PC-9 (cell line): ENCODE measurements at regions of chr9 and their contacts with region 1.

Region 1: GRCh38 chr9:125255781-125256391 is 5.7 kb upstream of the GAPVD1 start:
- DNase-seq: no peak
- H3K4me3 ChIP-seq: no peak overlapping the region
- H3K27ac ChIP-seq: no peak overlapping the region
- H3K4me1 ChIP-seq: peaks cover 9% of the 10 kb centered on the region
- H3K27me3 ChIP-seq: no peaks in the 10 kb centered on the region
- CTCF ChIP-seq: peak; percentile 58

Region 2: GRCh38 chr9:125374443-125375309 is 118.8 kb after region 1 on chr9:
- CTCF ChIA-PET with region 1: no interaction called
- POLR2A ChIA-PET with region 1: no interaction called
- intact Hi-C with region 1: loop called (anchors 2 kb)
- DNase-seq: peak; percentile 57 to 70
- H3K4me3 ChIP-seq: peak overlapping the region; percentile 49; the same call in 1 of the 2 replicates
- H3K27ac ChIP-seq: no peak overlapping the region
- H3K4me1 ChIP-seq: no peaks in the 10 kb centered on the region
- H3K27me3 ChIP-seq: no peaks in the 10 kb centered on the region
- CTCF ChIP-seq: peak; percentile 91

Region 3: GRCh38 chr9:126228781-126229444 is 973.0 kb after region 1 on chr9:
- CTCF ChIA-PET with region 1: no interaction called
- POLR2A ChIA-PET with region 1: no interaction called
- intact Hi-C with region 1: loop called (anchors 10 kb)
- DNase-seq: peak; percentile 44 to 70
- H3K4me3 ChIP-seq: no peak overlapping the region
- H3K27ac ChIP-seq: no peak overlapping the region
- H3K4me1 ChIP-seq: no peaks in the 10 kb centered on the region
- H3K27me3 ChIP-seq: peaks cover 85% of the 10 kb centered on the region
- CTCF ChIP-seq: peak; percentile 91